ENCODE measurements at regions of chr1 and their contacts with region 1.

Region 1: GRCh38 chr1:193850745-193851144 is 664.3 kb upstream of the B3GALT2 start:
- DNase-seq: no peak

Region 2: DNA sequence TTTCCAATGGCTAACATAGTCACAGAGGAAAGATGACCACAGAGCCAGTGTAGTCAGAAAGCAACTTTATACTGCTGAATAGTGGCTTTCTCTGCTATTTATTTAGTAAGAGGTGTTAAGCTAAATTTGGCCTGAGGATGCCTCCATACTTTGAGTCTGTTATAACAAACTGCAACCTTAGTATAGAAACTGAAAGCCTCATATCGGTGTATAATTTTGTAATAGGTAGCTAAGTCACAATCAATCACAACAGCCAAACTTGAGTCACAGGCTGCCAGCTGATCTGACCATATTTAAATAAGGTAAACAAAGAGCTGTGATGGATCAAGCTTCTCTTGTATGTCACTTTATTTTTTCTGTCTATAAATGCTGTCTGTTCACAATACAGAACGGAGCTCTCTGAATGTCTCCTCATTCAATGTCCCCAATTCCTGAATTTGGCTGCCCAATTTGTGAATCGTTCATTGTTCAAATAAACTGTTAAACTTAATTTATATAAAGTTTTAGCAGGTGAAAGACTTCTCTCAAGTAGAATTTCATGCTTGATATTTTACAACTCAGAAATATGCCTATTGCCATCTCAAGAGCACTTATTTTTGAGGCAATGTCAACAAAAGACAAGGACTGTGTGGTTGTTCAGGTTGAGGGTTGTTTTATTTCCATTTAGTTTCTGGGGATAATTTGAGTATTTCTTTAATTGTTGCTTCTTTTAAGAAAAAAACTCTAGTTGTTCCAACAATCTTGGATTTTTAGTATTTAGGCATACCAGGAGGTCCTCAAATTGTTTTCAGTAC is 324.6 kb before region 1 on chr1:
- intact Hi-C with region 1: loop called in 1 of 2 experiments (anchors 10 kb)
- DNase-seq: no peak

Region 3: GRCh38 chr1:194004146-194004545 is 153.4 kb after region 1 on chr1:
- intact Hi-C with region 1: no loop called
- DNase-seq: no peak

Region 4: DNA sequence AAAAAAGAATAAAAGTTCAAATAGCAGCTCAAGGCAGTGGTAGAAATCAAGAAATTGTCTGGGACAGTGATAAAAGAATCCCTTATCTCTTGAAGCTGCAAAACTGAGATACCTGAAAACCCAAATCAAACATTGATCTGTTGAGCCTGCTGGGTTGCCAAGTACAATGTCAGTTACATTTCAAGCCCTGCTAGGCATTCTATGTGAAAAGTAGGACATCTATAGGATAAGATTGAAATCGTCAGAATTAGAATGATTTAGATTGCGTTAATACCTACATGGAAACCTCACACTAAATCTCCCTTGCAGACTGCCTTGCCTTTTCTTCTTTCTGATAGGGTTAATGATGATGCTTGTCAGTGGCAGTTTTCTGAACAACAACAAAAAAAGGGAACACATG is 1020.1 kb after region 1 on chr1:
- intact Hi-C with region 1: no loop called
- DNase-seq: no peak

Measured in posterior vena cava (tissue), 2 donors.